B cell (primary cell): ENCODE measurements at regions of chr6 and their contacts with region 1.

Region 1: GRCh38 chr6:138428944-138429598 is 25.0 kb downstream of the HEBP2 start:
- DNase-seq: peak; percentile 68
- ATAC-seq: peak; percentile 28
- H3K4me3 ChIP-seq: no peak overlapping the region
- H3K4me3 Mint-ChIP-seq: no peak overlapping the region
- H3K27ac ChIP-seq: no peak overlapping the region
- H3K27ac Mint-ChIP-seq: no peak overlapping the region
- H3K4me1 ChIP-seq: peaks cover 0 to 4% of the 10 kb centered on the region in 2 donors
- H3K4me1 Mint-ChIP-seq: peaks cover 6% of the 10 kb centered on the region
- H3K27me3 ChIP-seq: peaks cover 0 to 4% (median 0%) of the 10 kb centered on the region in 4 experiments
- H3K27me3 Mint-ChIP-seq: peaks cover 9% of the 10 kb centered on the region
- CTCF ChIP-seq: peak; percentile 90

Region 2: DNA sequence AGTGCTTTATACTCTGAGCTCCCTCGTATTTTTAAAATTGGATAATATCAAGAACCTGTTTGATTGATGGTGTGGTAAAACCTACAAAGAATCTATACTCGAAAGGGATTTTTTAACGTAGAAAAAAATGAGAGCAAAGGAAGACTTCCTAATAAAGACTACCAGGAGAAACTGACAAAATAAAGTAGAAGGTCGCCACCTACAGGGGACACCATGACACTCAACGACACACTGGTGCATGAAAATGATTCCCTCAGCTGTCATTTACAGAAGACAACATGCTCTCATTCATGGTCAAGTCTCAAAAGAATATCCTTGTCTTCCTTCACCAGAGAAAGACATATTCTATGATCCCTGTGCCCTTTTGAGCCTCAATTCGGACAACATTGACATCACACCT is 80.3 kb after region 1 on chr6:
- CTCF ChIA-PET with region 1: interaction called, 127 read pairs
- POLR2A ChIA-PET with region 1: no interaction called
- intact Hi-C with region 1: loop called (anchors 1 kb)
- DNase-seq: peak; percentile 47
- ATAC-seq: no peak
- H3K4me3 ChIP-seq: no peak overlapping the region
- H3K4me3 Mint-ChIP-seq: no peak overlapping the region
- H3K27ac ChIP-seq: no peak overlapping the region
- H3K27ac Mint-ChIP-seq: no peak overlapping the region
- H3K4me1 ChIP-seq: no peaks in the 10 kb centered on the region
- H3K4me1 Mint-ChIP-seq: no peaks in the 10 kb centered on the region
- H3K27me3 ChIP-seq: no peaks in the 10 kb centered on the region
- H3K27me3 Mint-ChIP-seq: peaks cover 18% of the 10 kb centered on the region
- CTCF ChIP-seq: peak; percentile 44

Region 3: GRCh38 chr6:138517635-138518034 is 88.6 kb after region 1 on chr6:
- CTCF ChIA-PET with region 1: interaction called, 127 read pairs
- POLR2A ChIA-PET with region 1: no interaction called
- intact Hi-C with region 1: loop called (anchors 1 kb)
- DNase-seq: peak; percentile 70
- ATAC-seq: peak; percentile 86
- H3K4me3 ChIP-seq: no peak overlapping the region
- H3K4me3 Mint-ChIP-seq: no peak overlapping the region
- H3K27ac ChIP-seq: no peak overlapping the region
- H3K27ac Mint-ChIP-seq: peak overlapping the region; percentile 21
- H3K4me1 ChIP-seq: no peaks in the 10 kb centered on the region
- H3K4me1 Mint-ChIP-seq: no peaks in the 10 kb centered on the region
- H3K27me3 ChIP-seq: no peaks in the 10 kb centered on the region
- H3K27me3 Mint-ChIP-seq: peaks cover 17% of the 10 kb centered on the region
- CTCF ChIP-seq: peak; percentile 88

Region 4: DNA sequence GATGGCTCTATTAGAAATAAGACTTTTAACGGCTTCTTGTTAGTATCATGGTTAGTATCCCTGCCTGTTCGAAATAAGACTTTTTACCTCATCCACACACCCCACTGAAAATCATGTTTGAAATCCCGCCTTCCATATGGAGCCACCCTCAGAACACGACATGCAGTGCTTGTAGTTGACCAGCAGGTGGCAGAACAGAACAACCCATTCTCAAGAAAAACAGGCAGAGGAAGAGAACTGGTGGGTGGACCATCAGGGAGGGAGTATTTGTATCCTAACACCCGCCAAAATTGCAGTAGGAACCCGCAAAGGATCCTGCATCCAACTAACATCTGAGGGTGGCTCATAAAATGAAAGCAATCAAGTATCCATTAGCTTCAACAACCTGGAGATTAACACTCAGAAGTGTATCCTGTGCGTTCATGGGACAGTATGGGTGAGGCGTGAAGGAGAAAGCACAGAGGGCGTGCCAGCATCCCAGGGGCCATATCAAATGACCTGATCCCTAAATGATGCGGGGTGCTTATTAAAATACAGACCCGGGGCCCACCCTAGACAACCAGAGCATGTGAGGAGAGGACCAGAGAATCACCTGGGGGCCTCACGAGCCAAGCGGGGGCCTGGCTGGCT is 159.8 kb after region 1 on chr6:
- CTCF ChIA-PET with region 1: interaction called, 7 read pairs
- POLR2A ChIA-PET with region 1: no interaction called
- intact Hi-C with region 1: loop called (anchors 2 kb)
- DNase-seq: peak; percentile 76
- ATAC-seq: peak; percentile 68
- H3K4me3 ChIP-seq: no peak overlapping the region
- H3K4me3 Mint-ChIP-seq: no peak overlapping the region
- H3K27ac ChIP-seq: no peak overlapping the region
- H3K27ac Mint-ChIP-seq: no peak overlapping the region
- H3K4me1 ChIP-seq: peaks cover 12 to 13% of the 10 kb centered on the region in 2 donors
- H3K4me1 Mint-ChIP-seq: peaks cover 20% of the 10 kb centered on the region
- H3K27me3 ChIP-seq: no peaks in the 10 kb centered on the region
- H3K27me3 Mint-ChIP-seq: no peaks in the 10 kb centered on the region
- CTCF ChIP-seq: peak; percentile 92

Region 5: DNA sequence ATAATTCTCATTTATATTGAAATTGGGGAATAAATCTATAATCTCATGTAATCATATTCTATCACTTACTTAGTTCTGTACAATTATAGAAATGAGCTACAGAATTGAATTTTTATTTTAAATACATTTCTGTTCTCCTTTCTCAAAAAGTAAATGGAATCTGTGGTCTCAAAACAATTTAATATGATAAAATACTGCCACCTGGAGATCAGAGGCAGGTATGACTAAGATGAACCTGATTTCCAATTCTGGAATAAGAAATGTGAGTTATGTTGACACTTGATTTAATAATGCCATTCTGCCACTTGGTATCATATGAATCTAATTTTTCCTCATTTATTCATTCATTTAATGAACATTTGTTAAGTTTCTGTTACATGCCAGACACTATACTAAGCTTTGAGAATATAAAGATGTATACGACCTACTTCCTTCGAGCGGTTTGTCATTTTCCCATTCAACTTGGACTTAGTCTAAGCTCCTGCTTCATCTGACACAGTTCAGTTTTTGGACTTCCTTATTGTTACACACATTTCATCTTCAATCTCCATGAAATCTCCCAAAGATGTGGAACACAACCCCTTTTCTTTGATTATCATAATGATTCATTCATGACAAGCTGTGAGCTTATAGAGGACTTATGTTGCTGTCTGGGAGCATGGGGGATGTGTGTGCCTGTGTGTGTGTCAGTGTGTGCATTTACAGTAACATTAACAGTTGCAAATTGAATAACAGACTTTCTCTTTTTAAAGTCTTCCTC is 337.0 kb after region 1 on chr6:
- CTCF ChIA-PET with region 1: interaction called, 4 read pairs
- POLR2A ChIA-PET with region 1: no interaction called
- intact Hi-C with region 1: loop called (anchors 1 kb)
- DNase-seq: peak; percentile 57
- ATAC-seq: peak; percentile 47
- H3K4me3 ChIP-seq: no peak overlapping the region
- H3K4me3 Mint-ChIP-seq: no peak overlapping the region
- H3K27ac ChIP-seq: no peak overlapping the region
- H3K27ac Mint-ChIP-seq: no peak overlapping the region
- H3K4me1 ChIP-seq: peaks cover 9 to 13% of the 10 kb centered on the region in 2 donors
- H3K4me1 Mint-ChIP-seq: peaks cover 5% of the 10 kb centered on the region
- H3K27me3 ChIP-seq: no peaks in the 10 kb centered on the region
- H3K27me3 Mint-ChIP-seq: no peaks in the 10 kb centered on the region
- CTCF ChIP-seq: peak; percentile 84